Activated CD8-positive, alpha-beta T cell treated with anti-CD3 and anti-CD28 coated beads, Interleukin-2, amount 10 ng/mL, durations not matched to agents 7 days and 5 days (primary cell): ENCODE measurements at regions of chr12 and their contacts with region 1.

Region 1: GRCh38 chr12:51341259-51342007 is 5.0 kb downstream of the CELA1 start:
- DNase-seq: peak; percentile 81
- ATAC-seq: peak; percentile 86
- H3K4me3 Mint-ChIP-seq: no peak overlapping the region
- H3K27ac Mint-ChIP-seq: peak overlapping the region; percentile 65
- H3K4me1 Mint-ChIP-seq: peaks cover 9% of the 10 kb centered on the region
- H3K27me3 Mint-ChIP-seq: no peaks in the 10 kb centered on the region

Region 2: DNA sequence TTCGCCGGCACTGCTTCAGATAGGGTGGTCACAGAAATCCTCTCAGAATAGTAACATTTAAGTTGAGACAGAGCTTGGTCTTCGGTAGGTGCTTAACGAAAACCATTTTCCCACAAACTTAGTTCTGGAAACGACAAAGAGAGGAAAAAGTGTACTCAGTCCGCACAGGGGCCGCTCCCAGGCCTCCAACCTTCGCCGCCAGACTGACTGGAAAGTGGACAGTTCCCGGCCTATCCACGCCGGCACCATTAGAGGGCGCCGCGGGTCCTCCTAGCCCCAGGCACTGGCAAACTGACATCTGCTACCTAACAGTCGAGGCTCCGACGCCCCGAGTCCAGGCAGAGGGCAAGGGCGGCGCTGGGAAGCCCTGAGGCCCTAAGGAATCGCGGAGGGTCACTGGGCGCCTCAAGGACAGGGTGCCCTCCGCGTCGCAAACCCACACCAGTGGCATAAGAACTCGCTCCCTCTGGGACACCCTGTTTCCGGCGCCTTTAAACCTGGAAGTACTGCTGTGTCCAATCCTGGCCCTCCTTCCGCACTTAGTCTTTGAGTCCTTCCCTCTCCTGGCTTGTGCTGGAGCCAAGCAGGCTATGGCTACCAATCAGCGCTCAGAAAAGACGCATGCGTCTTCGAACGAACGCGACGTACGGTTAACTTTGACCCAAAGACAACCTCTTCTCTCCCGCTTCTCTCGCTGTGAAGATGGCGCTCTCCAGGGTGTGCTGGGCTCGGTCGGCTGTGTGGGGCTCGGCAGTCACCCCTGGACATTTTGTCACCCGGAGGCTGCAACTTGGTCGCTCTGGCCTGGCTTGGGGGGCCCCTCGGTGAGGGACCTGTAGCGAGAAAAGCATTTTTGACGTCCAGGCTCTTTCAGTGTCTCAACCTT is 293.5 kb before region 1 on chr12 and contains the start of gene LETMD1:
- CTCF ChIA-PET with region 1: interaction called, 15 read pairs
- POLR2A ChIA-PET with region 1: interaction called, 4 read pairs
- DNase-seq: peak; percentile 96
- ATAC-seq: peak; percentile 99
- H3K4me3 Mint-ChIP-seq: peak within 1 kb of the TSS; percentile 88
- H3K27ac Mint-ChIP-seq: peak within 1 kb of the TSS; percentile 87
- H3K4me1 Mint-ChIP-seq: peaks cover 31% of the 10 kb centered on the region
- H3K27me3 Mint-ChIP-seq: no peaks in the 10 kb centered on the region
- total RNA-seq, gene LETMD1: 60.1 to 69.7 TPM

Region 3: DNA sequence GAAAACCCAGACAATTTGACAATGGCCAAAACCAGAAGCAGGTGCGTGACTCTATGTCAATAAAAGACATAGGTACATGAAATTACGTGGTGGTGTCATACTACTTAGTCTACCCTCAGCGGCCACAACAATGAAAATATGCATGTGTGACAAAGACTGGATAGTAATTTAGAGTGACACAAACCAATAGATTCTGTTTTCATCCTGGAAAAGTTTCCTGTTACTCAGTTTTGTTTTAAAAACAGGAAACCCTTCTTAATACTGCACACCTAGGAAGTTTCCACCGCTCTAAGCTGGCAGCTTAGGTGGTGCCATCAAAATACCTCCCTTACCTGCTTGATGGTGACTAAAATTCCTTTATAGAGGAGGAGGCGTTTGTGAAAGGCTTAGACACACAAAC is 138.7 kb before region 1 on chr12:
- CTCF ChIA-PET with region 1: no interaction called
- POLR2A ChIA-PET with region 1: no interaction called
- DNase-seq: no peak
- ATAC-seq: no peak
- H3K4me3 Mint-ChIP-seq: no peak overlapping the region
- H3K27ac Mint-ChIP-seq: no peak overlapping the region
- H3K4me1 Mint-ChIP-seq: no peaks in the 10 kb centered on the region
- H3K27me3 Mint-ChIP-seq: no peaks in the 10 kb centered on the region

Region 4: GRCh38 chr12:51229116-51229809 is 112.2 kb before region 1 on chr12:
- CTCF ChIA-PET with region 1: no interaction called
- POLR2A ChIA-PET with region 1: no interaction called
- DNase-seq: no peak
- ATAC-seq: no peak
- H3K4me3 Mint-ChIP-seq: no peak overlapping the region
- H3K27ac Mint-ChIP-seq: no peak overlapping the region
- H3K4me1 Mint-ChIP-seq: peaks cover 6% of the 10 kb centered on the region
- H3K27me3 Mint-ChIP-seq: peaks cover 3% of the 10 kb centered on the region

Region 5: GRCh38 chr12:51254592-51254991 is 86.8 kb before region 1 on chr12:
- CTCF ChIA-PET with region 1: interaction called, 15 read pairs
- POLR2A ChIA-PET with region 1: no interaction called
- DNase-seq: no peak
- ATAC-seq: no peak
- H3K4me3 Mint-ChIP-seq: no peak overlapping the region
- H3K27ac Mint-ChIP-seq: peak overlapping the region; percentile 33
- H3K4me1 Mint-ChIP-seq: peaks cover 11% of the 10 kb centered on the region
- H3K27me3 Mint-ChIP-seq: no peaks in the 10 kb centered on the region

Region 6: GRCh38 chr12:51270067-51270970 is 71.1 kb before region 1 on chr12 and contains the start of gene SMAGP:
- CTCF ChIA-PET with region 1: interaction called, 66 read pairs
- POLR2A ChIA-PET with region 1: interaction called, 6 read pairs
- DNase-seq: peak; percentile 61
- ATAC-seq: peak; percentile 79
- H3K4me3 Mint-ChIP-seq: peak within 1 kb of the TSS; percentile 85
- H3K27ac Mint-ChIP-seq: peak within 1 kb of the TSS; percentile 67
- H3K4me1 Mint-ChIP-seq: peaks cover 28% of the 10 kb centered on the region
- H3K27me3 Mint-ChIP-seq: peaks cover 17% of the 10 kb centered on the region
- total RNA-seq, gene SMAGP: 4.3 to 4.7 TPM

Region 7: DNA sequence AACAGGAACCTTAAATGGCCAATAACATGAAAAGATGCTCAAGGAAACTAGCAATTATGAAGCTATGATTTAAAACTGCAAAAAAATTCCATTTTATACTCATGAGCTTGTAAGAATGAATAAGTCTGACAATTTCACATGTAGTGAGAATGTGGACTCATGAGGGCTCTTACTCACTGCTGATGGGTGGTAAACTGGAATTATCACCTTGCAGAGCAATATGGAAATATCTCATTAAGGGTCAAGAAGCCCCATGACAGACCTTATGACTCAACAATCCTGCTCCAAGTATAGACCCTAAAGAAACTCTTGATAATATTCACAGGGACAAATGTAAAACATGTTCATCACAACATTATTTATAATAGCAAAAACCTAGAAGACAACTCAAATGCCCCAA is 47.7 kb before region 1 on chr12:
- CTCF ChIA-PET with region 1: interaction called, 11 read pairs
- POLR2A ChIA-PET with region 1: no interaction called
- DNase-seq: no peak
- ATAC-seq: no peak
- H3K4me3 Mint-ChIP-seq: no peak overlapping the region
- H3K27ac Mint-ChIP-seq: no peak overlapping the region
- H3K4me1 Mint-ChIP-seq: peaks cover 3% of the 10 kb centered on the region
- H3K27me3 Mint-ChIP-seq: no peaks in the 10 kb centered on the region

Region 8: DNA sequence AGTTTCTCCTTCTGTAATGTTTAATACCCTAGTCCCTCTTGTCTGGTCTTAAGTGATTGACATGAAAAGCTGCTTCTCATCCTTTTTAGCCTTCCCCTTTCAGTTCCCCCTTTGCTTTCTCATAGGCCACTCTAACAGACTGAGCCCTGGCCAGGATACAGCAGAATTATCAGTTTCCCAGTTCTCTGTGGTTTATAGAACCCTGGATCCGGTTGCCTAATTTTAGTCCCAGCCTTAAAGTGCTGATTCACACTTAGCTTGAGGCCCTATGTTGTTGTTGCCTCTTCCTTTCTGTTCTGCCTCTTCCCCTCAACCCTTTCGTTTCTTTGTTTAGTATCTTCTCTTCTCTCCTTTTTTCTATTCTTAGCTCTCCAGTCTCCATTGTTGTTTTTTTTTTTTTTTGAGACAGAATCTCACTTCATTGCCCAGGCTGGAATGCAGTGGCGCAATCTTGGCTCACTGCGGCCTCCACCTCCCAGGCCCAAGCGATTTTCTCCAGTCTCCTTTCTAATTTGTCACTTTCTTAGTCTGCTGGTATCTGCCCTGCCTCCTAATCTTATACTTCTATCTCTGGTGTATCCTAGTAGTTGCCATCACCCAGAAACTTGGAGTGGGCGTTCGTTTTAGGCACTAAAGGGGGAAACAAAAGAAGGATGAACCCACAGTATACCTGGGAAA is 14.5 kb before region 1 on chr12:
- CTCF ChIA-PET with region 1: interaction called, 86 read pairs
- POLR2A ChIA-PET with region 1: interaction called, 8 read pairs
- DNase-seq: peak; percentile 36
- ATAC-seq: no peak
- H3K4me3 Mint-ChIP-seq: peak overlapping the region; percentile 51
- H3K27ac Mint-ChIP-seq: peak overlapping the region; percentile 91
- H3K4me1 Mint-ChIP-seq: peaks cover 68% of the 10 kb centered on the region
- H3K27me3 Mint-ChIP-seq: no peaks in the 10 kb centered on the region

Region 9: DNA sequence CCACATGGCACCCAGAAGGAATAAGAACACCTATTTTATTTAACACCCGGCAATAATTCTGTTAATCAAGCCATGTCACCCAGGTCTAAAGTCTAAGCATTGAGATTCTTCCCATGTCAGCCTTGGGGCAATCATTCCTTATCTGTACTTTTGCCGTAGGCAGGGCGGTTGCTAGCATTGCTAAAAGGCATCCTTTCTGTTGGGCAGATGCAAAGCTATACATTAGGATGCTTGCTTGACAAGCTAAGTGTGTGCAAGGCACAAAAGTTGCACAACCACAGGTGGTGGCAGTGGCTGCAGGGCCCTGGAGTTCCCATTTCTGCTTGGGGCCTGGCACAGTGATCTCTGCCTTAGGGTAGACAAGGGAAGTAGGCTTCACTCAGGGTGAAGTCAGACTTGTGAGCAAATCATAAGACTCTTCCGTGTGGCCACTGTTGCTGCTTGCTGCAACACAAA is 62.3 kb after region 1 on chr12:
- CTCF ChIA-PET with region 1: no interaction called
- POLR2A ChIA-PET with region 1: no interaction called
- DNase-seq: no peak
- ATAC-seq: no peak
- H3K4me3 Mint-ChIP-seq: no peak overlapping the region
- H3K27ac Mint-ChIP-seq: no peak overlapping the region
- H3K4me1 Mint-ChIP-seq: peaks cover 19% of the 10 kb centered on the region
- H3K27me3 Mint-ChIP-seq: peaks cover 2% of the 10 kb centered on the region